ENCODE measurements at regions of chr6 and their contacts with region 1.

Region 1: DNA sequence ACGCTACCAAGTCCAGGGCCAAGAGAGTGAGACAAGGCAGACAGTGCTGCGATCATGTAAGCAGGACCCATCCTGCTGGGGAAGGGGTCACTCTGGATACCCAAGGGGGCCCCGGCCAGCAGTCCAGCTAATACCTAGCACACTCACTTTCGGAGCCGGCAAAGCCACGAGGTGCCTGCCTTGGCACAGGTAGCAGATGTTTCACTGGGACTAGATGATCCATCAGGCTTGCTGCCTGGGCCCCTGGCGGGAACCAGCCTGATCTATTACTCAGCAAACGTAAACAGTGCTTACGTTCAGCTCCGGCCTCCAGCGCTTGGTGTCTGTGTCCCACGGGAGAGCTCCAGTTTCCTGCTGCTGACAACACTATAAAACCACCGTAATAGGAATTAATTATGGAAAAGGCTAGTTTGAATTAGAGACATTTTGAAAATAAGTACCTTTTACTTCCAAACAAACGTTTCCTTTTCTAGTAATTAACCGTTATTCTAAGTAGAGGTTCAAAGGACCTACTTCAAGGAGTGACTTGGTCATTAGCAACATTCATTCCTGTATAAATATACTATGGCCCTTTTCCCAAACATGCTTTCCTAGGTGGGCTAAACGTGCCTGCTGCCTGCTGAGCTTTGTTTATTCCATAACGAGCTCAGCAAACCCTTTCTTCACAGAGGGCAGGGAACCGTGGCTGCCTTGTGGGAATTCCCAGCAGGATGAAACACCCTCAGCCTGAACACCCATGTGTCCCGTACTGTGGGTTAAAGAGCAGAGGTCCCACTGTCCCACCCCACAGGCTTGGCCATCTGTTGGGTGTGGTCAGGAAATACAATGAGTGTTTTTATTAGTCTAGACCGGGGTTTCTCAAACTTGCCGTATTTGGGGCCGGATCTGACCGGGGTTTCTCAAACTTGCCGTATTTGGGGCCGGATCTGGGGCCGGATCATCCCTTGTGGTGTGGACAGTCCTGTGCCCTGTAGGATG is 18.4 kb downstream of the SLC22A23 start:
- DNase-seq: peak; percentile 56 to 68
- ATAC-seq: peak; percentile 85 to 91
- H3K4me3 ChIP-seq: peak overlapping the region in 1 of 4 donors; percentile 1
- H3K27ac ChIP-seq: peak overlapping the region; percentile 8 to 68 (median 65)
- H3K4me1 ChIP-seq: peaks cover 13 to 14% of the 10 kb centered on the region in 2 donors
- H3K27me3 ChIP-seq: no peaks in the 10 kb centered on the region
- CTCF ChIP-seq: no peak
- POLR2A ChIP-seq: peak in 1 of 2 donors; percentile 30

Region 2: DNA sequence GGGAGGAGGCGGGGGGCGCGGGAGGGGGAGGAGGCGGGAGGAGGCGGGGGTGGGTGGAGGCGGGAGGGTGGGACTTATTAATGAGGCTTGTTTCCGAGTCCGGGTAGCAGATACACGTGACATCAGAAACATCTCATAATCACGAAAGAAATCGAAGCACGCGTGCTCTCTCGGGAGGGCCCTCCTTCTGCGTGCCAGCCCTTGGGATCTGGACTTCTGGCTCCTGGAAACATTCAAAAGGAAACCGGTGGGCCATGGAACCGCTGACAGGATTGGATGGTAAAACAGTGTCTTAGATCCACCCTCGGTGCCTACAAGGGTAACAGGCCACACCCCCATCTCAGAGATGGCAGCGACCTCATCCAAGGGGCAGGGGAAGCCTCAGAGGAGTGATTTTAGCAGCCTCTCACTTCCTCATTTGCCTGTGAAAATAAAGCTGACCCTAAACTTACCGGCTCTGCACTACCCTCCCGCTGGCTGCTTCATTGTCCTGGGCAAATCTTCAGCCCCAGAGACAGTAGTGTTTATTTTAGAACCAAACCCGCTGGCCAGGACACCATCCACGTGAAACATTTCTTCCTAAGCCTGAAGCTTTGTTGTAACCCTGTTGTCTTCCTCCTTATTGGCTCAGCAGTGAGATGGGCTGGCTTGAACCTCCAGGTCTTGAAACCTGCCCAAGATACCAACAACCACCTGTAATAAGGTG is 82.3 kb before region 1 on chr6:
- in situ Hi-C with region 1: no loop called
- intact Hi-C with region 1: loop called (anchors 5 kb)
- DNase-seq: peak; percentile 64 to 79
- ATAC-seq: peak; percentile 79 to 82
- H3K4me3 ChIP-seq: peak overlapping the region; percentile 47 to 60 (median 55)
- H3K27ac ChIP-seq: peak overlapping the region; percentile 92 to 97 (median 95)
- H3K4me1 ChIP-seq: peaks cover 30 to 34% of the 10 kb centered on the region in 2 donors
- H3K27me3 ChIP-seq: no peaks in the 10 kb centered on the region
- CTCF ChIP-seq: no peak
- POLR2A ChIP-seq: peak in 1 of 2 donors; percentile 44